Activated CD8-positive, alpha-beta T cell treated with anti-CD3 and anti-CD28 coated beads for 36 hours (primary cell): ENCODE measurements at regions of chr1 and their contacts with region 1.

Region 1: DNA sequence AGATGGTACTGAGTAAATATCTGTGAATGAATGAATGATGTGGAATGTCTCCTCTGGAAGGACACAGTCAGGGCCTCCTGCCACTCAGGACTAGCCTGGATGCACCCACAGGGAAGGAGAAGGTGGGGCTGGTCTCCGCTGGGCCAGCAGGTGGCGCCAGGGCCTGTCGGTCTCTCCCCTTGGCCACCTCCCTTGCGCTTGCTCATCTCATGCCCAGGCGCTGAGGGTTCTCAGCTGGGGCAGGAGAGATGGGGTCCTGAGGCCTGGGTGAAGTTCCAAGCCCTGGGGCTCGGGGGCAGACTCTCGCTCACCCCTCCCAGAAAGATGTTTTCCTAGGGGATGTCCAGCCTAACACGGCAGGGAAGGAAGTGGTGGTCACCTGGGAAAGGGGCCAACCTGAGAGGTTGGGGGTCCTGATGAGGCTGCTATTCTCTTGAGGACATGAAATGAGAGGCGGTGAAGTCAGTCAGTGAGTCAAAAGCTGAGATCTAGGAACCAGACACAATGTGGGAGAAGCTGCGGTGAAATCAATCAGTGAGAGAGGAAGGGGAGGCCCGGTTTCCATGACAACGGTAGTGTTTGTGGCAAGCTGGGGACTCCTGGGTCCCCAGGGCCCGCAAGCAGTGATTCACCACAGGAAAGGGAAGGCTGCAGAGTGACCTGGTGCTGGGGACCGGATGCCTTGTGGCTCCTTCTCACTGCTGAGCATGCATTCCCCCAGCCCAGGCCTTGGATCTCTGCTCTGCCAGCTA is 14.6 kb upstream of the MEX3A start:
- DNase-seq: peak; percentile 97
- ATAC-seq: peak; percentile 81
- H3K4me3 Mint-ChIP-seq: peak overlapping the region; percentile 52
- H3K27ac Mint-ChIP-seq: peak overlapping the region; percentile 93
- H3K4me1 Mint-ChIP-seq: peaks cover 45% of the 10 kb centered on the region
- H3K27me3 Mint-ChIP-seq: peaks cover 20% of the 10 kb centered on the region
- CTCF ChIP-seq: peak; percentile 99

Region 2: DNA sequence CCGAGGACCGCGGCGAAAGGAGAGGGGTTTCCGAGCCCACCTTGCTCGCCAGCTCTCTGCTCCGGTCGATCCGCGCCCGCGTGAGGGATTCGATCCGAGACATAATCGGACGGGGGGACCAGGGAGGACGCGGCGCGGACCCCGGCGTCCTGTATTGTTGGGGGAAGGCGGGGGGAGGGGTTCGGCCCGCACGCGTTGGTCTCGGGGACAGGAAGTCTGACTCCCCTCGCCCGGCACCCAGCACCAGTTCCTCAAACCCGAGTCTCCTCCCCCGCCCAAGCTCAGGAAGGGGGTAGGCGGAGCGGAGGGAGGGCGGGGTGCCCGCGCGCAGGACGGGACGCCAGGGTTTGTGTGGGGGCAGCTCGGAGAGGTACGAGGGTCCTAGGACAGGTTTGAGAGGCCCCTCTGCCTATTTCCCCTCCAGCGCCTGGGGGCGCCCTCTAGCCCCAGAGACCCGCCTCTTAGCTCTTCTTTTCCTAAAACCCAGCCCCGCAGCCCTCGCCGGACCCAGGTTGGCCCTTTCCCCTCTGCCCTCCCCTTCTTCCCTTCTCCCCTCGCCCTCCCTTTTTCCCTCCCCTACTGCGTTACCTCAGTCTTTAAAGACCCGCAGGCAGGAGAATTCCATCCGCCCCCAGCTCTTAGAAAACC is 118.4 kb before region 1 on chr1 and contains the start of gene ARHGEF2:
- CTCF ChIA-PET with region 1: no interaction called
- POLR2A ChIA-PET with region 1: no interaction called
- intact Hi-C with region 1: no loop called
- DNase-seq: peak; percentile 93
- ATAC-seq: peak; percentile 68
- H3K4me3 Mint-ChIP-seq: peak within 1 kb of the TSS; percentile 98
- H3K27ac Mint-ChIP-seq: peak within 1 kb of the TSS; percentile 94
- H3K4me1 Mint-ChIP-seq: peaks cover 67% of the 10 kb centered on the region
- H3K27me3 Mint-ChIP-seq: no peaks in the 10 kb centered on the region
- CTCF ChIP-seq: peak; percentile 19
- total RNA-seq, gene ARHGEF2: 147 to 150 TPM

Region 3: GRCh38 chr1:156042828-156043227 is 54.0 kb before region 1 on chr1:
- CTCF ChIA-PET with region 1: no interaction called
- POLR2A ChIA-PET with region 1: no interaction called
- intact Hi-C with region 1: no loop called
- DNase-seq: no peak
- ATAC-seq: no peak
- H3K4me3 Mint-ChIP-seq: no peak overlapping the region
- H3K27ac Mint-ChIP-seq: no peak overlapping the region
- H3K4me1 Mint-ChIP-seq: peaks cover 3% of the 10 kb centered on the region
- H3K27me3 Mint-ChIP-seq: no peaks in the 10 kb centered on the region
- CTCF ChIP-seq: no peak

Region 4: GRCh38 chr1:156114101-156114916 is 17.5 kb after region 1 on chr1 and contains the start of gene LMNA:
- CTCF ChIA-PET with region 1: interaction called, 164 read pairs
- POLR2A ChIA-PET with region 1: interaction called, 94 read pairs
- intact Hi-C with region 1: no loop called
- DNase-seq: peak; percentile 92
- ATAC-seq: peak; percentile 89
- H3K4me3 Mint-ChIP-seq: peak within 1 kb of the TSS; percentile 85
- H3K27ac Mint-ChIP-seq: peak within 1 kb of the TSS; percentile 87
- H3K4me1 Mint-ChIP-seq: peaks cover 41% of the 10 kb centered on the region
- H3K27me3 Mint-ChIP-seq: peaks cover 8% of the 10 kb centered on the region
- CTCF ChIP-seq: no peak
- total RNA-seq, gene LMNA: 51.8 to 56.6 TPM

Region 5: DNA sequence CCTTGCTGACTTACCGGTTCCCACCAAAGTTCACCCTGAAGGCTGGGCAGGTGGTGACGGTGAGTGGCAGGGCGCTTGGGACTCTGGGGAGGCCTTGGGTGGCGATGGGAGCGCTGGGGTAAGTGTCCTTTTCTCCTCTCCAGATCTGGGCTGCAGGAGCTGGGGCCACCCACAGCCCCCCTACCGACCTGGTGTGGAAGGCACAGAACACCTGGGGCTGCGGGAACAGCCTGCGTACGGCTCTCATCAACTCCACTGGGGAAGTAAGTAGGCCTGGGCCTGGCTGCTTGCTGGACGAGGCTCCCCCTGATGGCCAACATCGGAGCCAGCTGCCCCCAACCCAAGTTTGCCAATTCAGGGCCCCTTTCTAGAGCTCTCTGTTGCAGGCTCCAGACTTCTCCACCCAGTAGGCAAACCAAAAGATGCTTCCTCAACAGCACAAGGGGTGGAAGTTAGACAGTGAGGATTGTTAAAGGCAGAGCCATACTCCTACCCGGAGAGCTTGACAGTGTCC is 40.2 kb after region 1 on chr1:
- CTCF ChIA-PET with region 1: interaction called, 772 read pairs
- POLR2A ChIA-PET with region 1: interaction called, 11 read pairs
- intact Hi-C with region 1: no loop called
- DNase-seq: no peak
- ATAC-seq: no peak
- H3K4me3 Mint-ChIP-seq: no peak overlapping the region
- H3K27ac Mint-ChIP-seq: no peak overlapping the region
- H3K4me1 Mint-ChIP-seq: no peaks in the 10 kb centered on the region
- H3K27me3 Mint-ChIP-seq: no peaks in the 10 kb centered on the region
- CTCF ChIP-seq: no peak

Region 6: DNA sequence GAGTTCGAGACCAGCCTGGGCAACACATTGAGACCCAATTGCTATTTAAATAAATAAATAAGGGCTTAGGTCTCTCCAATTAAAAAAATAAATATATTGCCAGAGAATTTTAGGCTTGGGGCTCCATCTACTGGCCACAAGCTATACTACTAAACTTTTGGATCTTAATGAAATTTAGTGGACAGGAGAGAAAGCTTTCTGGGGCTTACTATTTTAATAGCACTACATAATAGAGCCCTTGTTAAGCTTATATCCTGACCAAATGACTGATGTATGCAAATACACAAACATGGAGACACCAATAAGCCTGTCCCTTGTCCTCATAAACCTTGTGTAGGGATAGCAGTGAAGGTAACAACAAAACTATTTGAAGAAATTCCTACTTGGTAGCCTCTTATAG is 222.8 kb after region 1 on chr1:
- CTCF ChIA-PET with region 1: interaction called, 11 read pairs
- POLR2A ChIA-PET with region 1: no interaction called
- intact Hi-C with region 1: no loop called
- DNase-seq: peak; percentile 39
- ATAC-seq: no peak
- H3K4me3 Mint-ChIP-seq: no peak overlapping the region
- H3K27ac Mint-ChIP-seq: no peak overlapping the region
- H3K4me1 Mint-ChIP-seq: no peaks in the 10 kb centered on the region
- H3K27me3 Mint-ChIP-seq: no peaks in the 10 kb centered on the region
- CTCF ChIP-seq: peak; percentile 47